GM13976 (cell line): ENCODE measurements at regions of chr13 and their contacts with region 1.

Region 1: GRCh38 chr13:100588331-100589177 is at the start of gene GGACT:
- DNase-seq: peak; percentile 95
- CTCF ChIP-seq: peak; percentile 95

Region 2: DNA sequence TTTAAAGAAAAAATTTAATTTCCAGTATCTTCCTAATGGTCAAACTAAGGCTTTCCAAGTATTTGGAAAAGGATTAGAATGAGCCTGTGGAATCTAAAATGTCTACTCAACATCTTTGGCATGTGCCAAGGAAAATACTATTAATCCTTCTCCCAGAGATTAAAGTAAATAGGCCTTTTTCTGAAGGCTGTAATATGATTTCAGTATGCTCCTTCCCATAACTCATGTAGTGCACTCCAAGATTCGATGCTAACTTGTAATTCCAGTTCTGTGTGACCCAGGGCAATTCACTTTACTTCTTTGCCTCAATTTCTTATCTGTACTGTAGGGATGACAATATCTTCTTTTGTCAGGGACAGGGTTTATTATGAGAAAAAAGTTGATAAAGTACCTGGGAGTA is 813.9 kb before region 1 on chr13:
- in situ Hi-C with region 1: no loop called
- DNase-seq: no peak
- CTCF ChIP-seq: no peak

Region 3: GRCh38 chr13:100434010-100434763 is 154.4 kb before region 1 on chr13:
- in situ Hi-C with region 1: no loop called
- DNase-seq: peak; percentile 29
- CTCF ChIP-seq: no peak

Region 4: GRCh38 chr13:101115762-101116171 is 527.2 kb after region 1 on chr13:
- in situ Hi-C with region 1: loop called (anchors 25 kb)
- DNase-seq: no peak
- CTCF ChIP-seq: no peak

Region 5: GRCh38 chr13:101139081-101139480 is 550.5 kb after region 1 on chr13:
- in situ Hi-C with region 1: no loop called
- DNase-seq: no peak
- CTCF ChIP-seq: no peak